ENCODE measurements at regions of chr1 and their contacts with region 1.

Region 1: DNA sequence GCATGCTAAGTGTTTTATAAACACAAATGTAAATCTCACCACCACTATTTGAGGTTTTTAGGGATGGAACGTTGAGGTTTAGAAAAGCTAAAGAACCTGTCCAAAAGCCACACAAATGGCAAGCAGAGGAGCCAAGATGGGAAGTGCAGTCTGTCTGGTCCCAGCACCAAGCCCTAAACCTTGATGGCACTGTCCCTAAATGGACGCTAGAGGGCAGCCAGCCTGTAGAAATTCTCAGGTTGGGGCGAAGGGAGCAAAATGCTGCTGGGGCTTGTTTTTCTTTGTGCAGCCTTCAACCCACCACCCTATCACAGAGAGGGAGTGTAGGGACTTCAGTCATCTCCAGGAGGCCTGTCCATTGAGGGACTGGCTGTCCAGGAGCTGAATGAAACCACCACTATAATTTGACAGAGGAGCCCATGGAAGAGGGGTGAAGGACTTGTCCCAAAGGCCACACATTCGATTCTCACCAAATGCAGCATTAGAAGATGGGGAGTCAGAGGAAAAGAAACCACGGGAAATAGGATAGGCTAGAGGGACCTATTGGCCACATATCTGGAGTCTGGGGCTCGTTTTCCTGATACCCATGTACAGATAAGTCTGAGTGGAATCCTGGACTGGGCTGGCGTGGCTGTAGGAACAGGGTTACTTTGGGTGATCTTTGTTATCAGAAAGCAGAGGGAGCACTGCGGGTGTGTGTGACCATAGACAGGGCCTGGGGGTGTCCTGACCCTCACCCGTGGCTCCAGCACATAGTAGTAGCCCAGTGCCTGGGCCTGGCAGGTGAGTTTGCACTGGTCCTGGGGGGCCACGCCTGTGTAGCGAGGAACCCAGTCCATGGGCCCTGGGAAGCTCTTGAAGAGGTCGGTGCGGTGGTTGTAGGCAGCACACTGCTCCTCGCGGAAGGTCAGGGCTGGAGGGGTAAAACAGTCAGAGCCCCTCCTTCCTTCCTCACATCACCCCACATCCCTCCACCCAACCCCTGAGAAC is 6.1 kb downstream of the ADAMTS4 start:
- DNase-seq: peak; percentile 66 to 74 (median 71)
- H3K4me3 ChIP-seq: no peak overlapping the region
- H3K4me3 Mint-ChIP-seq: peak overlapping the region in 4 of 8 donors; percentile 17 to 53 (median 32)
- H3K27ac ChIP-seq: no peak overlapping the region
- H3K27ac Mint-ChIP-seq: peak overlapping the region; percentile 14 to 92 (median 82)
- H3K4me1 ChIP-seq: peaks cover 47% of the 10 kb centered on the region
- H3K4me1 Mint-ChIP-seq: peaks cover 22 to 43% (median 32%) of the 10 kb centered on the region in 4 donors
- H3K27me3 ChIP-seq: no peaks in the 10 kb centered on the region
- H3K27me3 Mint-ChIP-seq: no peaks in the 10 kb centered on the region

Region 2: GRCh38 chr1:160942926-160943325 is 249.8 kb before region 1 on chr1:
- CTCF ChIA-PET with region 1: no interaction called
- POLR2A ChIA-PET with region 1: no interaction called
- intact Hi-C with region 1: no loop called
- DNase-seq: no peak
- H3K4me3 ChIP-seq: no peak overlapping the region
- H3K4me3 Mint-ChIP-seq: no peak overlapping the region
- H3K27ac ChIP-seq: no peak overlapping the region
- H3K27ac Mint-ChIP-seq: no peak overlapping the region
- H3K4me1 ChIP-seq: no peaks in the 10 kb centered on the region
- H3K4me1 Mint-ChIP-seq: no peaks in the 10 kb centered on the region
- H3K27me3 ChIP-seq: no peaks in the 10 kb centered on the region
- H3K27me3 Mint-ChIP-seq: peaks cover 0 to 2% of the 10 kb centered on the region in 2 donors

Region 3: GRCh38 chr1:161117759-161118581 is 74.8 kb before region 1 on chr1 and contains the starts of genes NIT1 and PFDN2:
- CTCF ChIA-PET with region 1: no interaction called
- POLR2A ChIA-PET with region 1: no interaction called
- intact Hi-C with region 1: no loop called
- DNase-seq: peak; percentile 83 to 87 (median 86)
- H3K4me3 ChIP-seq: peak within 1 kb of the TSS; percentile 32 to 95
- H3K4me3 Mint-ChIP-seq: peak within 1 kb of the TSS; percentile 94 to 98 (median 96)
- H3K27ac ChIP-seq: peak within 1 kb of the TSS; percentile 94
- H3K27ac Mint-ChIP-seq: peak within 1 kb of the TSS; percentile 94 to 99 (median 98)
- H3K4me1 ChIP-seq: peaks cover 64% of the 10 kb centered on the region
- H3K4me1 Mint-ChIP-seq: peaks cover 36 to 79% (median 61%) of the 10 kb centered on the region in 4 donors
- H3K27me3 ChIP-seq: no peaks in the 10 kb centered on the region
- H3K27me3 Mint-ChIP-seq: no peaks in the 10 kb centered on the region
- total RNA-seq, gene NIT1: 49.0 to 50.5 TPM
- total RNA-seq, gene PFDN2: 40.8 to 41.0 TPM

Region 4: DNA sequence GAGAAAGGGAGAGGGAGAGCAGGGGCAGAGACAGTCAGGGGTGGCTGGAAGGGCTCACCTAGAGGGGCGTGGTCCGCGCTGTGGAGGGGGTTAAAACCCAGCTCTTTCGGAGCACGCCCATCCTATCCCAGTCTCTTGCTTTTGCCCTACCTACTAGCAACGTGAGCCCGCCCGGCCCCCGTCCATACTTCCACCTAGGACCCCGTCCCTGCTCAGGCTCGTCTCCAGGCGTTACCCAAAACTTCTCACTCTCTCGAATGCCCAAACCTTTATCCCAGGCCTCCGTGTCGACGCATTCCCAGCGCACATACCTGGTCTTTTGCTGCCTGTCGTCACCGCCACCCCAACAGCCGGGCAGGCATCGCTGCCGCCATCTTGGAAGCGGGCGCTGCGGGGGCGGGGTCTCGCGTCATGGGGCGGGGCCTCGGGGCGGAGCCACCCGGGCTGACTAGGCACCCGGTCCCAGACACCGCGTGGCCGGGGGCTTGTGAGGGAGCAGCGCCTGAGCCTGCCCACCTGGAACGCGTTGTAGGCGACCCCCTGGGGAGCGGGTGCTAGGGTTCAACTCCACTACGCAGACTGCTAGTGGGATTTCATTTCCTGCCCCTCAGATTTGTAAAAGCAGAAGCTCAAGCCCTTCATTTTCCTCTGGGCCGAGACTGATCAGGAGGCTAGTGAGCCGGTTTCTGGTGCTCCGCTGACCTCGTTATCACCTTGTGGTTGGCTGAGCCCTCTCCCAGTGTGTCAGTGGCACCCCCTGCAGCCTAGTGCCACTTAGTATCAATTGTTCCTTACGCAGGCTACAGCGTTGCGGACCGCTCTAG is 15.4 kb before region 1 on chr1 and contains the start of gene B4GALT3:
- CTCF ChIA-PET with region 1: interaction called, 121 read pairs
- POLR2A ChIA-PET with region 1: interaction called, 96 read pairs
- intact Hi-C with region 1: loop called (anchors 1 kb)
- DNase-seq: peak; percentile 89 to 94 (median 90)
- H3K4me3 ChIP-seq: peak within 1 kb of the TSS; percentile 90 to 97
- H3K4me3 Mint-ChIP-seq: peak within 1 kb of the TSS; percentile 98 to 100 (median 100)
- H3K27ac ChIP-seq: peak within 1 kb of the TSS; percentile 85
- H3K27ac Mint-ChIP-seq: peak within 1 kb of the TSS; percentile 95 to 100 (median 99)
- H3K4me1 ChIP-seq: peaks cover 56% of the 10 kb centered on the region
- H3K4me1 Mint-ChIP-seq: peaks cover 45 to 85% (median 68%) of the 10 kb centered on the region in 4 donors
- H3K27me3 ChIP-seq: no peaks in the 10 kb centered on the region
- H3K27me3 Mint-ChIP-seq: no peaks in the 10 kb centered on the region
- total RNA-seq, gene B4GALT3: 64.6 to 71.5 TPM

Region 5: GRCh38 chr1:161209790-161210409 is 17.1 kb after region 1 on chr1:
- CTCF ChIA-PET with region 1: interaction called, 71 read pairs
- POLR2A ChIA-PET with region 1: no interaction called
- intact Hi-C with region 1: no loop called
- DNase-seq: peak; percentile 64 to 74 (median 68)
- H3K4me3 ChIP-seq: no peak overlapping the region
- H3K4me3 Mint-ChIP-seq: no peak overlapping the region
- H3K27ac ChIP-seq: no peak overlapping the region
- H3K27ac Mint-ChIP-seq: peak overlapping the region; percentile 57 to 88 (median 68)
- H3K4me1 ChIP-seq: peaks cover 25% of the 10 kb centered on the region
- H3K4me1 Mint-ChIP-seq: peaks cover 20 to 38% (median 27%) of the 10 kb centered on the region in 4 donors
- H3K27me3 ChIP-seq: no peaks in the 10 kb centered on the region
- H3K27me3 Mint-ChIP-seq: no peaks in the 10 kb centered on the region

Region 6: DNA sequence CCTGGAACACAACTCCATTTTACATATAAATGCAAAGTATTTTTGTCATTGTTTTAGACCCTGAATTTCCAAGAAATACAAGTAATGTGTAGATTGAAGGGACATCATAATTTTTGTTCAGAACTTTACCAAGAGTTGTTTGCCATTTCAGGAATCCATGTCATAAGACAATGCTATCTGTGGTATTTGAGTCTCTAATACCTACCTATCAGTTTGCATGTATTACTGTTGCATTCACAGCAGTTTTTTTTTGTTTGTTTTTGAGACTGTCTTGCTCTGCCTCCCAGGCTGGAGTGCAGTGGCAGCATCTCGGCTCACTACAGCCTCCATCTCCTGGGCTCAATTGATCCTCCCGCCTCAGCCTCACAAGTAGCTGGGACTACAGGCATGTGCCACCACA is 99.9 kb after region 1 on chr1:
- CTCF ChIA-PET with region 1: interaction called, 21 read pairs
- POLR2A ChIA-PET with region 1: no interaction called
- intact Hi-C with region 1: loop called (anchors 1 kb)
- DNase-seq: no peak
- H3K4me3 ChIP-seq: no peak overlapping the region
- H3K4me3 Mint-ChIP-seq: no peak overlapping the region
- H3K27ac ChIP-seq: no peak overlapping the region
- H3K27ac Mint-ChIP-seq: no peak overlapping the region
- H3K4me1 ChIP-seq: no peaks in the 10 kb centered on the region
- H3K4me1 Mint-ChIP-seq: peaks cover 0 to 5% (median under 1%) of the 10 kb centered on the region in 4 donors
- H3K27me3 ChIP-seq: no peaks in the 10 kb centered on the region
- H3K27me3 Mint-ChIP-seq: no peaks in the 10 kb centered on the region

Region 7: GRCh38 chr1:161305867-161306519 is 113.2 kb after region 1 on chr1:
- CTCF ChIA-PET with region 1: interaction called, 24 read pairs
- POLR2A ChIA-PET with region 1: no interaction called
- intact Hi-C with region 1: no loop called
- DNase-seq: peak; percentile 89 to 92 (median 90)
- H3K4me3 ChIP-seq: peak overlapping the region; percentile 48 to 86
- H3K4me3 Mint-ChIP-seq: peak overlapping the region; percentile 89 to 100 (median 97)
- H3K27ac ChIP-seq: peak overlapping the region; percentile 77
- H3K27ac Mint-ChIP-seq: peak overlapping the region; percentile 91 to 99 (median 96)
- H3K4me1 ChIP-seq: peaks cover 29% of the 10 kb centered on the region
- H3K4me1 Mint-ChIP-seq: peaks cover 17 to 41% (median 29%) of the 10 kb centered on the region in 4 donors
- H3K27me3 ChIP-seq: no peaks in the 10 kb centered on the region
- H3K27me3 Mint-ChIP-seq: no peaks in the 10 kb centered on the region

Region 8: DNA sequence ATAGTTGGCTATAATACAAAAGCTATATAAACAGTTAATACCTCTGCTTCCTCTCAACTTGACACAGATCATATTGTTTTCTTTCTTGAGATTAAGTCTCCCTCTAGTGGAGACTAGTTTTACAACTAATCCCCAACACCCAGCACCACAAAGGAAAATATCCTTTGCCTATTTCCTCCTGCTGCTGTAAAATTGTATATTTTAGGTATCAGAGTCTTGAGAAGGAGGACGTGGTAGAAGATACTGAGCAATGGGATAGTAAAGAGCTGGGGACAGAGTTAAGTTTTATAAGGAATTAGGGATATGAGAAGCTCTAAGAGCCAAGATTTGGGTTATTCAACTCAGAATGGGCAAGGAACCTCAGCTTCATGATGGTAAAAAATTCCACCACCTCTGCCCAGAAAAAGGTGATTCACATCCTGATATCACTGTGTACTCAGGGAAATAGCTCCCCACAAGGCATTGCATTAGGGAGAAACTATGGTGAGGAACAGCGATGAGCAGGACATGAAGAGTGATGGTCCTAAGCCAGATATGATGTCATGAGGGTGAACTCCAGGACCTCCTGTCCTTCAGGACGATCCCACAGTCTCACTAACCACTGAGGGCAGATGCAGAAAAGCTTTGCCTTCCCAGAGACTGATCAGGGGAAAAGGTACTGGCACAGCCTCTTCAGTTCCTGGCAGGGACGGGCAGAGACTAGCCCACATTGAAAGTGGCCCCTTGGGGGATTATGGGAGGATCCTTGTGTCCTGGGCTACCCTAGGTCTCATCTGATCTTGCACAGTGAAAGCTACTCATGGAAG is 189.6 kb after region 1 on chr1:
- CTCF ChIA-PET with region 1: interaction called, 13 read pairs
- POLR2A ChIA-PET with region 1: no interaction called
- intact Hi-C with region 1: loop called (anchors 1 kb)
- DNase-seq: peak in 4 of 5 donors; percentile 48 to 61 (median 56)
- H3K4me3 ChIP-seq: no peak overlapping the region
- H3K4me3 Mint-ChIP-seq: no peak overlapping the region
- H3K27ac ChIP-seq: no peak overlapping the region
- H3K27ac Mint-ChIP-seq: peak overlapping the region in 3 of 7 donors; percentile 3 to 76 (median 7)
- H3K4me1 ChIP-seq: peaks cover 17% of the 10 kb centered on the region
- H3K4me1 Mint-ChIP-seq: peaks cover 7 to 14% (median 13%) of the 10 kb centered on the region in 4 donors
- H3K27me3 ChIP-seq: no peaks in the 10 kb centered on the region
- H3K27me3 Mint-ChIP-seq: no peaks in the 10 kb centered on the region